IMR-90 (cell line): ENCODE measurements at regions of chr10 and their contacts with region 1.

Region 1: DNA sequence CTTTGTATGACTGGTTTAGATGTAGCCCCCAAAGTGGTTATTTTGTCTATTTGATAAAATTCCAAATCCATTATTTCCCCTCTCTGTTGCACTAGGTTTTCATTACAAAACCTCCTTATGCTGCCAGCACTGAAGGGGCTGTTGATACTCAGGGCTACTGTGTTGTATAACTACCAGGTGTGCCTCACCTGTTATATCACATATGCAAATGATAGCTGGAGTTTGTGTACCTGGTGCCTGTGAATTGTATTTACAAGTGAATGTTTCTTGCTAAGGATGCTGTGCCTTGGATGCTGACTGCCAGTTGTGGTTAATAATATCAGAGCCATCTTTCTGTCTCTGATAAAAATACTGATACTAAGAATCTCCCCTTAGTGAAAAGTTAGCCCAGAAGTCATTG is 84.8 kb upstream of the CCDC6 start:
- DNase-seq: no peak
- ATAC-seq: no peak
- H3K4me3 ChIP-seq: no peak overlapping the region
- H3K27ac ChIP-seq: no peak overlapping the region
- H3K4me1 ChIP-seq: no peaks in the 10 kb centered on the region
- H3K27me3 ChIP-seq: no peaks in the 10 kb centered on the region; the same call in 1 of the 2 replicates
- CTCF ChIP-seq: no peak
- POLR2A ChIP-seq: no peak
- RAD21 ChIP-seq: no peak

Region 2: GRCh38 chr10:59968705-59969104 is 22.4 kb before region 1 on chr10:
- CTCF ChIA-PET with region 1: no interaction called
- POLR2A ChIA-PET with region 1: interaction called, 15 read pairs
- dilution Hi-C with region 1: no loop called
- in situ Hi-C with region 1: no loop called
- intact Hi-C with region 1: no loop called
- DNase-seq: no peak
- ATAC-seq: no peak
- H3K4me3 ChIP-seq: no peak overlapping the region
- H3K27ac ChIP-seq: no peak overlapping the region
- H3K4me1 ChIP-seq: no peaks in the 10 kb centered on the region
- H3K27me3 ChIP-seq: no peaks in the 10 kb centered on the region; the same call in 1 of the 2 replicates
- CTCF ChIP-seq: no peak
- POLR2A ChIP-seq: no peak
- RAD21 ChIP-seq: no peak

Region 3: GRCh38 chr10:60123172-60124067 is 132.3 kb after region 1 on chr10:
- CTCF ChIA-PET with region 1: no interaction called
- POLR2A ChIA-PET with region 1: no interaction called
- dilution Hi-C with region 1: no loop called
- in situ Hi-C with region 1: no loop called
- intact Hi-C with region 1: no loop called
- DNase-seq: peak; percentile 76
- ATAC-seq: peak; percentile 74
- H3K4me3 ChIP-seq: no peak overlapping the region
- H3K27ac ChIP-seq: no peak overlapping the region
- H3K4me1 ChIP-seq: peaks cover 3% of the 10 kb centered on the region; the same call in 1 of the 2 replicates
- H3K27me3 ChIP-seq: no peaks in the 10 kb centered on the region
- CTCF ChIP-seq: no peak
- POLR2A ChIP-seq: no peak
- RAD21 ChIP-seq: no peak